ENCODE measurements at regions of chr2 and their contacts with region 1.

Region 1: GRCh38 chr2:135709992-135710391 is 31.7 kb upstream of the UBXN4 start:
- DNase-seq: peak; percentile 31 to 32
- ATAC-seq: peak; percentile 66 to 86
- H3K4me3 ChIP-seq: no peak overlapping the region
- H3K27ac ChIP-seq: no peak overlapping the region
- H3K4me1 ChIP-seq: no peaks in the 10 kb centered on the region
- CTCF ChIP-seq: peak; percentile 91
- EP300 ChIP-seq: no peak
- POLR2A ChIP-seq: no peak
- RAD21 ChIP-seq: peak; percentile 84 to 86

Region 2: GRCh38 chr2:134988994-134989605 is 720.9 kb before region 1 on chr2:
- CTCF ChIA-PET with region 1: interaction called, 15 read pairs
- POLR2A ChIA-PET with region 1: interaction called, 3 read pairs
- DNase-seq: peak; percentile 18 to 40
- ATAC-seq: peak; percentile 80 to 90
- H3K4me3 ChIP-seq: no peak overlapping the region
- H3K27ac ChIP-seq: no peak overlapping the region
- H3K4me1 ChIP-seq: no peaks in the 10 kb centered on the region
- CTCF ChIP-seq: peak; percentile 70
- EP300 ChIP-seq: no peak
- POLR2A ChIP-seq: no peak
- RAD21 ChIP-seq: peak; percentile 67 to 70

Region 3: DNA sequence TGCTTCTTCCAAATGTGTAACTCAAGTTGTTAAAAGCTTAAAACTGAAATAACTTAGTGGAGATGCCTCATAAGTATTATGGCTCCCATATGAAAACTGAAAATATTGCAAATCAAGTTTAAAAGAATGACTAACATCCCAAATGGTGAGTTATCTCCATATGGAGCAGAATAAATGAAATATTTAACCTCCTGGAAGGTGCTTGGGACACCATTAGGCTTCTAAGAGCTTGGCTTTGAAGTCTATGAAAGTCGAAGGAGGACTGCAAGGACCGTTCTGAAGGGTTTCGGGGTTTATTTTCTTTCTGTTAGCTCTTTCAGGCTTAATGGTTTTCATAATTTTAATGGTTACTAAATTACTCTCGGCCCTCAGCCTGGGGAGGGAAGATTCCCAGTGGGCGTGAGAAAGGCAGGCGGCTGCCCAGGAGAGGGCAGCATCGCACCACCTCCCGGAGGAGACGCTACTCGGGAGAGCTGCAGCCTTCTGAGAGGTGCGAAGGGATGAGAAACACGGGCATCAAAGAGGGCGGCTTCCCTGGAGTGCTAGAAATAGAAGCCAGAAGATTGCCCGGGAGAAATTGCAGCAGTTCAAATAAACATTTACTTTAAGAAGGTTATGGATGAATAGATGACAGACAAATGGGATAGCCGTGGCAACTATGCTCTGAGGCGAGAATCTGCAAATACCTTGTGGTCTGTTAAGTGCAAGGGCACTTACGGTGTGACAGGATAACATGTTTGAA is 705.8 kb before region 1 on chr2:
- CTCF ChIA-PET with region 1: interaction called, 79 read pairs
- POLR2A ChIA-PET with region 1: no interaction called
- DNase-seq: peak; percentile 63 to 64
- ATAC-seq: peak; percentile 98 to 100
- H3K4me3 ChIP-seq: no peak overlapping the region
- H3K27ac ChIP-seq: no peak overlapping the region
- H3K4me1 ChIP-seq: no peaks in the 10 kb centered on the region; the same call in 2 of the 3 replicates
- CTCF ChIP-seq: peak; percentile 92
- EP300 ChIP-seq: no peak
- POLR2A ChIP-seq: no peak
- RAD21 ChIP-seq: peak; percentile 96 to 98

Region 4: DNA sequence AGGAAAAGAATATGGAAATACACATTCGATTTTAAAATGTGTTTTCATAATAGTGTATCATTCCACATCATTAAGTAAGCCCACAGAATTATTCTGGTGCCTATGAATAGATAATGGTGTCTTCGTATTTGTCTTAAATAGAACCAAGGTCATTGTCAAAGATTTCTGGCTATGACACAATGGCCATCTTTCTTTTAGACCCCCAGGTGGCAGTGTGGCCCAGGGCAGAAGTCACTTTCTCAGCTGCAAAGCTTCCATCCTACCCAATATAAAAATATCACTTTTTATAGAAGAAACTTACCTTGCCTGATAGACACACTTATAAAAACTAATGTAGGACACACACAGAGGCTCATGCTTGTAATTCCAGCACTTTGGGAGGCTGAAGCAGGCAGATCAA is 236.4 kb before region 1 on chr2:
- CTCF ChIA-PET with region 1: interaction called, 15 read pairs
- POLR2A ChIA-PET with region 1: no interaction called
- DNase-seq: peak; percentile 3 to 27
- ATAC-seq: peak; percentile 50 to 70; a peak in 2 of 6 replicates
- H3K4me3 ChIP-seq: no peak overlapping the region
- H3K27ac ChIP-seq: no peak overlapping the region
- H3K4me1 ChIP-seq: no peaks in the 10 kb centered on the region
- CTCF ChIP-seq: peak; percentile 50
- EP300 ChIP-seq: no peak
- POLR2A ChIP-seq: no peak
- RAD21 ChIP-seq: peak; percentile 51 to 65

Region 5: DNA sequence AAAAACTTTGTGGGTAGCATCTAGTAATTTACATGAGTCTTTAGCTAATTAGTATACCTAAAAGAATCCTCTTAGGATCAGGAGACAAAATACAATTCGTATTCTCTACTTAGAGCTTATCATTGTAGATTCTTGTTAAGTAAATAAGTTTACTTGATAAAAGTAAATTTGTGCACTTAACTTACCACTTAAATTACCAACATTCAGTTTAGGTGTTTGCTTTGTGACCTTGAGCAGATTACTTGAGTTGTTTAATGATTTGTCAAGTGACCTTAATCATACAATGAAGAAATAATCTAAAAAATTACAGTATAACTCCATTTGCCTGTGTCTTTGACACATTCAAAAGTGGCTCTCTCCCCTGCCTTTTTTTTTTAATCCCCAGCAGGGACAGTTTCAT is 35.5 kb before region 1 on chr2:
- CTCF ChIA-PET with region 1: interaction called, 10 read pairs
- POLR2A ChIA-PET with region 1: no interaction called
- DNase-seq: no peak
- ATAC-seq: no peak
- H3K4me3 ChIP-seq: no peak overlapping the region
- H3K27ac ChIP-seq: no peak overlapping the region
- H3K4me1 ChIP-seq: no peaks in the 10 kb centered on the region
- CTCF ChIP-seq: no peak
- EP300 ChIP-seq: no peak
- POLR2A ChIP-seq: no peak
- RAD21 ChIP-seq: no peak

Region 6: DNA sequence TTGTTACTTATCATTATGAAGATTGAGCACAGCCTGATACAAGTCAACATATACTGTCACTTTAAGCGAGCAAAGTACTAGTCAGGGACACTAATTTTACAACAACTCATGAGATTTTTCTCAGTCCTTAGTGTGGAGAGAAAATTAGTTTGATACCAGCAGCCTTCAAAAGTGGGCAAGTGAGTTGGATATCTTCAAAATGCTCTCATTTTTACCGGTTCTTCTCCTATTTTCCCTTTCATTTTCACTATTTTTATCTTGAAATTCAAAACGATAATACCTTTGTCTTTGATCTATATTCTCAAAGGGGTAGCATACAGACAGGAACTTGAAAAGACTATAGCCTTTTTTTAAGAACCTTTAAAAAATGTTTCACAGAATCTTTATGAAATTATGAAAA is 20.3 kb before region 1 on chr2:
- CTCF ChIA-PET with region 1: interaction called, 12 read pairs
- POLR2A ChIA-PET with region 1: no interaction called
- DNase-seq: no peak
- ATAC-seq: no peak
- H3K4me3 ChIP-seq: no peak overlapping the region
- H3K27ac ChIP-seq: no peak overlapping the region
- H3K4me1 ChIP-seq: peaks cover 12% of the 10 kb centered on the region
- CTCF ChIP-seq: no peak
- EP300 ChIP-seq: no peak
- POLR2A ChIP-seq: no peak
- RAD21 ChIP-seq: no peak

Region 7: DNA sequence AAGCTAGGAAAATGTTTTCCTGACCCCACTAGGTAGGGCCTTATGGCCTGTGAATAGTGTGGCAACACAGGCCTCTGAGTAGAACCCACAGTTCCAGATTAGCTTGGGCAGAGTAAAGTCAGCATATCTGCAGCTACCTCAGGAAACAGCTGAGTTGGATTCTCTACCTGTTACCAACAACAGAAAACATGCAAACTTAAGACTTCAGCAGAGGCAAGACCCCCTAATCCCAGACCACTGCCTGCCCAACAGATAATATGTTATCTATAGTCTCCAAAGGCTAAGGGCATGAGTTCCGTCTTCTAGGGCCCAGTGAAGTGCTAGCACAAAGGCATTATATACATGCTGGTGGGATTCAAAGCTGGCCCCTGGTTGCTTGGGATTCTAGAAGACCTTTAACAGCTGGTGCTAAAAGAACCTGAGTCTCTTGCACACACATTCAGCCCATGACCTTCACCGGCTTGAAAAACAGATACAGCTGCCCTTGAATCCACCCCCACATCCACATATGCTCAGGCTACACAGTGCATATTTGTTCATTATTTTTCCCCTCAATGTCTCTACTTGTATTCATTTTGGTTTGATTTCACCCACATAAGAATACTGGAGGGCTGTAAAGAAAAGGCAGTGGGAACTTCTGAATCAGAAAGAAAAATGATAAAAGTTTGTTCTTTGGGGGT is 18.2 kb after region 1 on chr2:
- CTCF ChIA-PET with region 1: interaction called, 16 read pairs
- POLR2A ChIA-PET with region 1: no interaction called
- DNase-seq: no peak
- ATAC-seq: no peak; a peak in 1 of 6 replicates
- H3K4me3 ChIP-seq: no peak overlapping the region
- H3K27ac ChIP-seq: no peak overlapping the region
- H3K4me1 ChIP-seq: no peaks in the 10 kb centered on the region
- CTCF ChIP-seq: no peak
- EP300 ChIP-seq: no peak
- POLR2A ChIP-seq: no peak
- RAD21 ChIP-seq: no peak

Region 8: GRCh38 chr2:136195226-136195625 is 485.2 kb after region 1 on chr2:
- CTCF ChIA-PET with region 1: no interaction called
- POLR2A ChIA-PET with region 1: no interaction called
- DNase-seq: no peak
- ATAC-seq: no peak
- H3K4me3 ChIP-seq: no peak overlapping the region
- H3K27ac ChIP-seq: no peak overlapping the region
- H3K4me1 ChIP-seq: no peaks in the 10 kb centered on the region
- CTCF ChIP-seq: no peak
- EP300 ChIP-seq: no peak
- POLR2A ChIP-seq: no peak
- RAD21 ChIP-seq: no peak

Measured in A549 (cell line).